Mammary epithelial cell (primary cell): ENCODE measurements at regions of chr14 and their contacts with region 1.

Region 1: DNA sequence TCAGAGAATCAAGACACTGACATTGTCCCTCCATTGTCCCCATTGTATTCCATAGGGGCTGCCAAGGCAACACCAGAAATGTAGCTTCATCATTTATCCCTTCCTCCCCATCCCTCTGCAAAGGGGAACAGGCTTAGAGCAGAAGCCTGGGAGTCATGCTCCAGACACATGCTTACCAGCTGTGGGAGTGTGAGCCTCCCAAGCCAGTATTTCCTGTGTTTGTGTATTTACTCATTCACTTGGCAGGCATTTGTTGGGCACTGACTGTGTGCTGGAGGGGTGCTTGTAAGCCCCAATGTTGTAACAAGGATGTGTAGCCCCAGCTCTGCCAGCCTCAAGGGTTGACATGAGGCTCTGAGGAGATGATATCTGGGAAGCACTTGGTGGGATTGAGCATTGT is 46.0 kb upstream of the TCL1A start:
- DNase-seq: no peak
- H3K4me3 ChIP-seq: no peak overlapping the region
- H3K27ac ChIP-seq: no peak overlapping the region
- H3K4me1 ChIP-seq: no peaks in the 10 kb centered on the region
- H3K27me3 ChIP-seq: no peaks in the 10 kb centered on the region
- CTCF ChIP-seq: no peak

Region 2: GRCh38 chr14:95683793-95684192 is 76.1 kb before region 1 on chr14:
- CTCF ChIA-PET with region 1: no interaction called
- dilution Hi-C with region 1: loop called (anchors 5 kb)
- in situ Hi-C with region 1: no loop called
- intact Hi-C with region 1: no loop called
- DNase-seq: no peak
- H3K4me3 ChIP-seq: no peak overlapping the region
- H3K27ac ChIP-seq: no peak overlapping the region
- H3K4me1 ChIP-seq: no peaks in the 10 kb centered on the region
- H3K27me3 ChIP-seq: no peaks in the 10 kb centered on the region
- CTCF ChIP-seq: peak; percentile 73 to 74

Region 3: GRCh38 chr14:95786566-95786965 is 26.6 kb after region 1 on chr14:
- CTCF ChIA-PET with region 1: no interaction called
- dilution Hi-C with region 1: loop called (anchors 5 kb)
- in situ Hi-C with region 1: no loop called
- intact Hi-C with region 1: no loop called
- DNase-seq: no peak
- H3K4me3 ChIP-seq: no peak overlapping the region
- H3K27ac ChIP-seq: no peak overlapping the region
- H3K4me1 ChIP-seq: no peaks in the 10 kb centered on the region
- H3K27me3 ChIP-seq: no peaks in the 10 kb centered on the region
- CTCF ChIP-seq: no peak